GM12878 (cell line): ENCODE measurements at regions of chrX and their contacts with region 1.

Region 1: DNA sequence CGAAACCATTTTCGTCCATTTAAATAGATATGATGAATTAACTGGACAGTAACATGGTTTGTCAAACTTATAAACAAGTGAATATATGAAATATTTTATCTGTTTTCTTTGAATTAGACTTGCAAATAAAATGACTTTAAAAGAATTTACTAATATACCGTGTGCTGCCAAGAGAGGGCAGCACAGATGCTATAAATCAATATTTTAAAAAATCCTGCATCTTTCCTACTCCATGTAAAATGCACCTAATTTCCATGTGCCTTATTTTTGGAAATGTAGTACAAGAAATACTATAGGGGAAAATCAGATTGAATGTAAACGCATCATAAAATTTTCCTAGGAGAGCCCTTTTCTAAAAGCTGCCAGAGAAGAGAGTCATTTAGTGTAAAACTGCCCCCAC is 62.2 kb downstream of the PRKX start:
- DNase-seq: no peak
- ATAC-seq: peak; percentile 45; the same call in 1 of the 3 replicates
- H3K4me3 ChIP-seq: no peak overlapping the region
- H3K27ac ChIP-seq: no peak overlapping the region
- H3K4me1 ChIP-seq: no peaks in the 10 kb centered on the region
- H3K27me3 ChIP-seq: no peaks in the 10 kb centered on the region
- CTCF ChIP-seq: peak; percentile 46 to 63 (median 55); a peak in 5 of 6 replicates
- EP300 ChIP-seq: no peak
- POLR2A ChIP-seq: no peak
- RAD21 ChIP-seq: peak; percentile 65

Region 2: DNA sequence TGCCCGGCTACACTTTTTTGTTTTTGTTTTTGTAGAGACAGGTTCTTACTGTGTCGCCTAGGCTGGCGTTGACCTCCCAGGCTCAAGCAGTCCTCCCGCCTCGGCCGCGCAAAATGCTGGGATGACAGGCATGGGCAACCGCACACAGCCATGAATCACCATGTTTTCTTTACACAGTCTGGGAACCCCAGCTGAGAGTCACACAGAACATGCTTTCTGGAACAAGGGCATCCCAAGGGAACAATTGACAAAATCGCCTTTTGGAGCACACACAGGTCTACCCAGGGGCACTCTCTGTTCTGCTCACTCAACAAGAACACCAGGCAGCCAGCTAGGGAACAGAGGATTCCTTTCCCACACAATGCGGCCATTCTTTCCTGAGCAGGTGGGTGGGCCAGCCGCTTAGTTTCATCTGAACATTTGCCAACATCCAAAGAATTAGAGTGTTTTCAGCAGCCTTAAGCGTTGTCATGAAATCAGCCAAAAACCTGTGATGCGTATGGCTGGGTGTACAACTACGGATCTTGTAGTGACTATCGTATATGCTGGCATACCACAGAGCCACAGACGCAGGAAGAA is 46.5 kb after region 1 on chrX:
- CTCF ChIA-PET with region 1: interaction called, 12 read pairs
- POLR2A ChIA-PET with region 1: no interaction called
- RAD21 ChIA-PET with region 1: no interaction called
- SMC1A ChIA-PET with region 1: interaction called, 3 read pairs
- in situ Hi-C with region 1: no loop called
- intact Hi-C with region 1: no loop called
- DNase-seq: no peak
- ATAC-seq: no peak
- H3K4me3 ChIP-seq: no peak overlapping the region
- H3K27ac ChIP-seq: no peak overlapping the region
- H3K4me1 ChIP-seq: peaks cover 5% of the 10 kb centered on the region; the same call in 1 of the 2 replicates
- H3K27me3 ChIP-seq: no peaks in the 10 kb centered on the region
- CTCF ChIP-seq: no peak
- EP300 ChIP-seq: no peak
- POLR2A ChIP-seq: no peak
- RAD21 ChIP-seq: no peak

Region 3: GRCh38 chrX:3803713-3804112 is 152.4 kb after region 1 on chrX:
- CTCF ChIA-PET with region 1: interaction called, 10 read pairs
- POLR2A ChIA-PET with region 1: no interaction called
- RAD21 ChIA-PET with region 1: no interaction called
- SMC1A ChIA-PET with region 1: interaction called, 9 read pairs
- in situ Hi-C with region 1: no loop called
- intact Hi-C with region 1: no loop called
- DNase-seq: no peak
- ATAC-seq: no peak
- H3K4me3 ChIP-seq: no peak overlapping the region
- H3K27ac ChIP-seq: no peak overlapping the region
- H3K4me1 ChIP-seq: no peaks in the 10 kb centered on the region
- H3K27me3 ChIP-seq: 0 out of 4 replicates have a peak, but pooled peaks cover 1 to 3% of the 10 kb centered on the region in 2 experiments
- CTCF ChIP-seq: no peak
- EP300 ChIP-seq: no peak
- POLR2A ChIP-seq: no peak
- RAD21 ChIP-seq: no peak